Activated T-helper 2 cell treated with anti-CD3 and anti-CD28 coated beads, Interferon-gamma antibody, Interleukin-2, Interleukin-4, amounts not matched to agents 10 μg/mL and 5 μg/mL and 100 μg/mL, durations not matched to agents 14 hours and 24 hours and 36 hours (primary cell): ENCODE measurements at regions of chr1 and their contacts with region 1.

Region 1: GRCh38 chr1:11893907-11894251 is 32.3 kb downstream of the KIAA2013 start:
- DNase-seq: peak; percentile 54
- H3K4me3 Mint-ChIP-seq: no peak overlapping the region
- H3K27ac Mint-ChIP-seq: no peak overlapping the region
- H3K4me1 Mint-ChIP-seq: no peaks in the 10 kb centered on the region
- H3K27me3 Mint-ChIP-seq: peaks cover 26% of the 10 kb centered on the region

Region 2: GRCh38 chr1:11838349-11839272 is 55.3 kb before region 1 on chr1:
- intact Hi-C with region 1: loop called (anchors 1 kb)
- DNase-seq: peak; percentile 59
- H3K4me3 Mint-ChIP-seq: no peak overlapping the region
- H3K27ac Mint-ChIP-seq: no peak overlapping the region
- H3K4me1 Mint-ChIP-seq: peaks cover 3% of the 10 kb centered on the region
- H3K27me3 Mint-ChIP-seq: no peaks in the 10 kb centered on the region

Region 3: GRCh38 chr1:11882814-11883538 is 10.9 kb before region 1 on chr1:
- intact Hi-C with region 1: no loop called
- DNase-seq: no peak
- H3K4me3 Mint-ChIP-seq: no peak overlapping the region
- H3K27ac Mint-ChIP-seq: no peak overlapping the region
- H3K4me1 Mint-ChIP-seq: no peaks in the 10 kb centered on the region
- H3K27me3 Mint-ChIP-seq: no peaks in the 10 kb centered on the region